Natural killer cell (primary cell): ENCODE measurements at regions of chr6 and their contacts with region 1.

Region 1: DNA sequence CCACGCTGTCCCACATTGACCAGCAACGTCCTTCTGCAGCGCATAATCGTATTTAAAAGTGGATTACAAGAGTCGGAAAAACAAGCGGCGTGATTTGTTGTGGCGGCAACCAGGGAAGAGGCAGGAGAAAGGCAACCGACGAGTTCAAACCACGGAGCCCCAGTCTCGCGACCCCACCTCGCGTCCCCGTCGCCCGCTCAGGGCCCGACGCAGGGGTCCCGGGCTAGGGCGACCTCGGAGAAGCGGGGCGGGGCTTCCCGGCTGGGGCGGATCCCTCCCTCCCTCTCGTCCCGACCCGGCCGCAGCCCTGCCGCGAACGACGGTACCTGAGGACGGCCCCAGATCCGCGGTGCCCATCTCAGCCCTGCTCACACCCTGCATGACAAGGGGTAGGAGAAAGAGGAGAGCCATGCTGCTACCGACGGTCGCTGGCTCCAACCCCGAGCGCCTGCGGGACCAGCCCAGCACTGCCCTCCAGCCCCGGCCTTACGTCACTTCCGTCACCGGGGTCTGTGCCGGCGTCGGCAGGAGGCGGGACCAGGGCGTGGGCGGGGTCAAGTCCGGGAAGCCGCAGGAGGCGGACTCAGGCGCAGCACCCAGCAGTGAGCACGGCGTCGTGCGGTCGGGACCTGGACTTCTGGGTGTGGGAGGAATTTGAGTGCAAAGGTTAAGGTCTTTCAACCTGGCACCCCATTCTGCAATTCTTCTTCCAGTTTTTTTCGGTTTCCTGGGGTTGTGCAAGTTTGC is at the start of gene IFNGR1:
- DNase-seq: peak; percentile 96 to 97
- ATAC-seq: peak; percentile 82 to 93 (median 91)
- H3K4me3 ChIP-seq: peak within 1 kb of the TSS; percentile 78
- H3K4me3 Mint-ChIP-seq: peak within 1 kb of the TSS; percentile 100
- H3K27ac ChIP-seq: peak within 1 kb of the TSS; percentile 93
- H3K27ac Mint-ChIP-seq: peak within 1 kb of the TSS; percentile 99
- H3K4me1 ChIP-seq: peaks cover 45% of the 10 kb centered on the region
- H3K4me1 Mint-ChIP-seq: peaks cover 64 to 65% of the 10 kb centered on the region in 2 donors
- H3K27me3 ChIP-seq: no peaks in the 10 kb centered on the region
- H3K27me3 Mint-ChIP-seq: no peaks in the 10 kb centered on the region
- CTCF ChIP-seq: no peak
- total RNA-seq, gene IFNGR1: 77.5 to 128 (median 100) TPM

Region 2: GRCh38 chr6:137165375-137166246 is 53.5 kb before region 1 on chr6:
- intact Hi-C with region 1: no loop called
- DNase-seq: peak; percentile 38 to 58
- ATAC-seq: peak; percentile 70 to 82 (median 72)
- H3K4me3 ChIP-seq: no peak overlapping the region
- H3K4me3 Mint-ChIP-seq: peak overlapping the region; percentile 77
- H3K27ac ChIP-seq: peak overlapping the region; percentile 5
- H3K27ac Mint-ChIP-seq: peak overlapping the region; percentile 39 to 53
- H3K4me1 ChIP-seq: peaks cover 27% of the 10 kb centered on the region
- H3K4me1 Mint-ChIP-seq: peaks cover 44 to 47% of the 10 kb centered on the region in 2 donors
- H3K27me3 ChIP-seq: no peaks in the 10 kb centered on the region
- H3K27me3 Mint-ChIP-seq: peaks cover 22 to 31% of the 10 kb centered on the region in 2 donors
- CTCF ChIP-seq: no peak

Region 3: GRCh38 chr6:137233911-137234863 is 15.1 kb after region 1 on chr6:
- intact Hi-C with region 1: loop called (anchors 1 kb)
- DNase-seq: peak in 1 of 2 donors; percentile 72
- ATAC-seq: peak; percentile 67 to 77 (median 75)
- H3K4me3 ChIP-seq: no peak overlapping the region
- H3K4me3 Mint-ChIP-seq: peak overlapping the region; percentile 77
- H3K27ac ChIP-seq: peak overlapping the region; percentile 50
- H3K27ac Mint-ChIP-seq: peak overlapping the region; percentile 79 to 88
- H3K4me1 ChIP-seq: peaks cover 51% of the 10 kb centered on the region
- H3K4me1 Mint-ChIP-seq: peaks cover 64 to 72% of the 10 kb centered on the region in 2 donors
- H3K27me3 ChIP-seq: no peaks in the 10 kb centered on the region
- H3K27me3 Mint-ChIP-seq: no peaks in the 10 kb centered on the region
- CTCF ChIP-seq: no peak